Activated CD8-positive, alpha-beta T cell treated with anti-CD3 and anti-CD28 coated beads for 36 hours (primary cell): ENCODE measurements at regions of chr6 and their contacts with region 1.

Region 1: DNA sequence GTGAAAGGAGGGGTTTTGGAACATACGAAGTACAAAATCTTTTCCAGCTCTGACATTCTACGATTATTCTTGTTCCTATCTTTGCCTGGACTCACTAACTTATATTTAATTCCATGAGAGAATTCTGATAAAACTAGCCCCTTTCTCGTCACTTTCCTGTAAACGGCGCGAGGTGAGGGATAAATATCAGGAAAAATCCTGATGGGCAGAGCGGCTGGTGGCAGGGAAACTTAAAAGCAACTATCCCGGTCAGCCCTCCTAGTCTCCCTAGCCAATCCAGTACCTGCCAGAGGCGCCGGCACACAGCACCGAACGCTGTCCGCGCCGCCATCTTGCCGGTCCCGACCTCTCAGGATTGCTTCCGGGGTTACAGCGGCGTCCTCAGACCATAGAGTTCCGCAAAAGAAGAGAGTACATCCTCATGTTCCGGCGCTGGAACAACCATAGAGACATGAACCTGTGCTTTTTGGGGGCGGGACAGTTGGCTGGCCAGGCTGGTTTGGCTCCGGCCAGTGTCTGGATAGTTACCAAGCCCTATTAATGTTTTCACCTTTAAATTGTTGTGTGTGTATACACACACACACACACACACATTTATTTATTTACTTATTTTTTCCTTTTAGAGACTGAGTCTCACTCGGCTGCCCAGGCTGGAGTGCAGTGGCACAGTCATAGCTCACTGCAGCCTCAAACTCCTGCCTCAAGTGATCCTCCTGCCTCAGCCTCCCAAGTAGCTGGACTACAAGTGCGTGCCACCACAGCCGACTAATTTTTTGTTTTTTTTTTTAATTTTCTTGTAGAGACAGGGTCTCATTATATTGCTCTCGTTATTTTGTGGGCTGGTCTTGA is at the start of gene MRPS10:
- DNase-seq: peak; percentile 95
- ATAC-seq: peak; percentile 100
- H3K4me3 Mint-ChIP-seq: peak within 1 kb of the TSS; percentile 100
- H3K27ac Mint-ChIP-seq: peak within 1 kb of the TSS; percentile 97
- H3K4me1 Mint-ChIP-seq: peaks cover 31% of the 10 kb centered on the region
- H3K27me3 Mint-ChIP-seq: no peaks in the 10 kb centered on the region
- CTCF ChIP-seq: no peak
- total RNA-seq, gene MRPS10: 36.7 to 38.9 TPM

Region 2: DNA sequence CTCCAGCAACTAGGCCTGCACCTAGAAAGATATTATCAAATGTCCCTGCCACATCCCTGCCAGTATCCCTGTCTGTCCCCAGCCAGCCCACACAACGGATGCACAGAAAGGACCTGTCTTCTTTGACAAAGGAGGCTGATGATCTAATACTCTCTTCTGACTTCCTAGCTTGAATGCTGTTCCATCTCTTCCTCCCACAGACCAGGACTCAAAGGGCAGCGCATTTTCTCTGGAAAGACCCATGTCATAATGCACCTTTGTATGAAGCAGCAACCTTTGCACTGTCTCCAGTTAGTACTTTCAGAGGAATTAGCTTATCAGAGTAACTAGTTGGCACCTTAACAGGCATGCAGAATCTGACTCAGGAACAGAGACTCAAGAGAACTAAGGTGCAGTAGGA is 220.7 kb before region 1 on chr6:
- CTCF ChIA-PET with region 1: no interaction called
- POLR2A ChIA-PET with region 1: no interaction called
- intact Hi-C with region 1: no loop called
- DNase-seq: no peak
- ATAC-seq: peak; percentile 32
- H3K4me3 Mint-ChIP-seq: no peak overlapping the region
- H3K27ac Mint-ChIP-seq: peak overlapping the region; percentile 81
- H3K4me1 Mint-ChIP-seq: peaks cover 41% of the 10 kb centered on the region
- H3K27me3 Mint-ChIP-seq: no peaks in the 10 kb centered on the region
- CTCF ChIP-seq: no peak

Region 3: GRCh38 chr6:42204768-42205282 is 12.9 kb before region 1 on chr6:
- CTCF ChIA-PET with region 1: interaction called, 14 read pairs
- POLR2A ChIA-PET with region 1: interaction called, 3 read pairs
- intact Hi-C with region 1: no loop called
- DNase-seq: no peak
- ATAC-seq: no peak
- H3K4me3 Mint-ChIP-seq: no peak overlapping the region
- H3K27ac Mint-ChIP-seq: no peak overlapping the region
- H3K4me1 Mint-ChIP-seq: peaks cover 3% of the 10 kb centered on the region
- H3K27me3 Mint-ChIP-seq: no peaks in the 10 kb centered on the region
- CTCF ChIP-seq: no peak

Region 4: GRCh38 chr6:42232035-42232434 is 14.3 kb after region 1 on chr6:
- CTCF ChIA-PET with region 1: interaction called, 11 read pairs
- POLR2A ChIA-PET with region 1: interaction called, 7 read pairs
- intact Hi-C with region 1: no loop called
- DNase-seq: no peak
- ATAC-seq: no peak
- H3K4me3 Mint-ChIP-seq: no peak overlapping the region
- H3K27ac Mint-ChIP-seq: peak overlapping the region; percentile 17
- H3K4me1 Mint-ChIP-seq: peaks cover 3% of the 10 kb centered on the region
- H3K27me3 Mint-ChIP-seq: no peaks in the 10 kb centered on the region
- CTCF ChIP-seq: no peak